Endothelial cell of umbilical vein (primary cell): ENCODE measurements at regions of chr1 and their contacts with region 1.

Region 1: DNA sequence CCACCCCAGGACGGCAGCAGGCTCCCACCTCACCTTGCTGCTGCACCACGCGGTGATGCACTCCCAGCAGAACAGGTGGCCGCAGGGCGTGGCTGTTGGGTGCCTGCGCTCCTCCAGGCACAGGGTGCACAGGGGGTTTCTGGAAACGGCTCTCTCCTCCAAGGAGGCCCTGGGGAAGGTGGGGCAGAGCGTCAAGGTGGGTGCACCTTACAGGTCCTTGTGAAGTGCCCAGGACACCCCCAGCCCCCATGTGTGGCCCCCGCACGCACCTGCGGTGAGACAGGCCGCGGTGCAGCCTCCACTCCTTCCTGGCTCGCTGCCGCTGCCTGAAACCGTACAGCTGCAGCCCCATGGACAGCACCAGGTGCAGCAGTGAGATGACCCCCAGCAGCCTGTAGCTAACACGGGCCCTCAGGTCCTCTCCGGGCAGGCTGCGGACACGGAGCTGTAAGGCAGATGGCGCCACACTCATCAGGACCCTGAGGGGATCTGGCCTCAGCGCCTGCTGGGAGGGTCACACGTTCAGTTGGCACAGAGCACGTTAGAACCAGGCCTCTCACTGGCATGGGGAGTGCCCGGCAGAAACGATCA is 5.8 kb downstream of the PEX10 start:
- DNase-seq: no peak
- H3K4me3 ChIP-seq: no peak overlapping the region
- H3K27ac ChIP-seq: no peak overlapping the region
- H3K4me1 ChIP-seq: peaks cover 13% of the 10 kb centered on the region
- H3K27me3 ChIP-seq: no peaks in the 10 kb centered on the region
- CTCF ChIP-seq: no peak
- POLR2A ChIP-seq: peak; percentile 29

Region 2: DNA sequence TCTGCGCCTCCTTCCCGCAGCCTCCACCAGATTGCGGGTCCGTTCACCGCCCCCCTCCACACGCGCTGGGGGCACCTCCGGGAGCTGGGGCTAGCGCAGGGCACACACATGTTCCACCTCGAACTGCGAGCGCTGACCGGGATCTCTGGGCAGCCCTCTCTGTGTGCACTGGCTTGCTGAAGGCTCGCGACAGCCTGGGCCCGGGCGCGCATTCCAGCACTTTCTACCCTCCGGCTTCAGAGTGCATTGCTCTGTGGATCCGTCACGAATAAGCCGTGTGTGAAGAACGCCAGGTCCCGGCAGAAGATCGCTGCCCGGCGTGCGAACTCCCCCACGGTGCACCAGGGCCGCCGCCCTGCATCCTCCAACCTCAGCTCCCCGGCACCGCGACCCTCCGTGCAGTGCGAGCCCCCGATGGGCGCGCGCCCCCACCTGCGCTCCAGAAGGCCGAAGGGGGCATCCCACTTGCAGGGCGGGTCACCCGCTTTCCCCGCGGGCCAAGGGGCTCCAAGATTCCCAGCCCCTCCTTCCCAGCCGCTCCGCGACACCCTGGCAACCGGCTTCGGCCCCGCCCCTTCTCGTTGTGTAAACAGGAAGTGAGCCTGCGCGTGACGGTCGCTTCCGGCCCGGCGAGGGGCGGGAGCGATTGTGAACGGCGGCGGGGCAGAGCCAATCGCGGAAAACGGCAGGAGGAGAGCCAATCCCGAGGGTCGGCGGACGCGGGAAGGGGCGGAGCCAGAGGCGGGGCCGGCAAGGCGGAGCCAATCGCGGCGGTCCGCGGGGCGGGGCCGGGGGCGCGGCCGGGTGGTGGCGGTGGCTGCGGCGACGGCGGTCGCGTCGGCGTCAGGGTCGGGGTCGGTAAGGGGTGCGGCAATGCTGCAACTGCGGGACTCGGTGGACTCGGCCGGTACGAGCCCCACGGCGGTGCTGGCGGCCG is 1217.9 kb after region 1 on chr1 and contains the start of gene TPRG1L:
- CTCF ChIA-PET with region 1: no interaction called
- POLR2A ChIA-PET with region 1: no interaction called
- dilution Hi-C with region 1: no loop called
- intact Hi-C with region 1: loop called (anchors 10 kb)
- DNase-seq: peak; percentile 97
- H3K4me3 ChIP-seq: peak within 1 kb of the TSS; percentile 53 to 60 (median 54)
- H3K27ac ChIP-seq: peak within 1 kb of the TSS; percentile 25
- H3K4me1 ChIP-seq: peaks cover 13% of the 10 kb centered on the region
- H3K27me3 ChIP-seq: no peaks in the 10 kb centered on the region
- CTCF ChIP-seq: no peak
- POLR2A ChIP-seq: peak; percentile 3
- total RNA-seq, gene TPRG1L: 46.2 and 53.8 TPM in 2 replicates